GM10248 (cell line): ENCODE measurements at regions of chr1 and their contacts with region 1.

Region 1: GRCh38 chr1:112619520-112620376 is at the start of gene CAPZA1:
- DNase-seq: peak; percentile 89
- CTCF ChIP-seq: no peak

Region 2: GRCh38 chr1:112492076-112492475 is 127.7 kb before region 1 on chr1:
- CTCF ChIA-PET with region 1: no interaction called
- POLR2A ChIA-PET with region 1: no interaction called
- DNase-seq: no peak
- CTCF ChIP-seq: no peak

Region 3: DNA sequence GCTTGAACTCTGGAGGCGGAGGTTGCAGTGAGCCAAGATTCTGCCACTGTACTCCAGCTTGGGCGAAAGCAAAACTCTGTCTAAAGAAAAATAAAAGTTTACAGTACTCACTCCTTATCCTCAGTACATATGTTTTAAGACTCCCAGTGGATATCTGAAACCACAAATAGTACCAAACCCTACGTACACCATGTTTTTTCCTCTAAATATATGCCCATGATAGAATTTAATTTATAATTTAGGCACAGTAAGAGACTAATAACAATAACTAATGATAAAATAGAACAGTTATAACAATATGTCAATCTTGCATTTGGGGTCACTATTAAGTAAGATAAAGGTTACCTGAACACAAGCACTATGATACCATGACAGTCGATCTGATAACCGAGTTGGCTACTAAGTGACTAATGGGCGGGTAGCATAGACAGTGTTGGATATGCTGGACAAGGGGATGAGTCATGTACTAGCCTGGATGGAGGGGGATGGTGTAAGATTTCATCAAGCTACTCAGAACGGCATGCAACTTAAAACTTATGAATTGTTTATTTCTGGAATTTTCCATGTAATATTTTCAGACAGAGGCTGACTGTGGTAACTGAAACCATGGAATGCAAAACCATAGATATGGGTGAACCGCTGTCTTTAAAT is 44.5 kb before region 1 on chr1:
- CTCF ChIA-PET with region 1: no interaction called
- POLR2A ChIA-PET with region 1: no interaction called
- DNase-seq: no peak
- CTCF ChIP-seq: no peak

Region 4: GRCh38 chr1:112605633-112606327 is 14.0 kb before region 1 on chr1:
- CTCF ChIA-PET with region 1: interaction called, 17 read pairs
- POLR2A ChIA-PET with region 1: no interaction called
- DNase-seq: no peak
- CTCF ChIP-seq: no peak